ENCODE measurements at regions of chr3 and their contacts with region 1.

Region 1: GRCh38 chr3:6807967-6808588 is 52.8 kb upstream of the GRM7 start:
- DNase-seq: no peak
- H3K4me3 ChIP-seq: no peak overlapping the region
- H3K27ac ChIP-seq: no peak overlapping the region
- H3K4me1 ChIP-seq: no peaks in the 10 kb centered on the region
- H3K27me3 ChIP-seq: no peaks in the 10 kb centered on the region
- CTCF ChIP-seq: no peak

Region 2: GRCh38 chr3:6204891-6205290 is 603.2 kb before region 1 on chr3:
- intact Hi-C with region 1: loop called (anchors 10 kb)
- DNase-seq: no peak
- H3K4me3 ChIP-seq: no peak overlapping the region
- H3K27ac ChIP-seq: no peak overlapping the region
- H3K4me1 ChIP-seq: no peaks in the 10 kb centered on the region
- H3K27me3 ChIP-seq: no peaks in the 10 kb centered on the region
- CTCF ChIP-seq: no peak